ENCODE measurements at regions of chr19 and their contacts with region 1.

Region 1: DNA sequence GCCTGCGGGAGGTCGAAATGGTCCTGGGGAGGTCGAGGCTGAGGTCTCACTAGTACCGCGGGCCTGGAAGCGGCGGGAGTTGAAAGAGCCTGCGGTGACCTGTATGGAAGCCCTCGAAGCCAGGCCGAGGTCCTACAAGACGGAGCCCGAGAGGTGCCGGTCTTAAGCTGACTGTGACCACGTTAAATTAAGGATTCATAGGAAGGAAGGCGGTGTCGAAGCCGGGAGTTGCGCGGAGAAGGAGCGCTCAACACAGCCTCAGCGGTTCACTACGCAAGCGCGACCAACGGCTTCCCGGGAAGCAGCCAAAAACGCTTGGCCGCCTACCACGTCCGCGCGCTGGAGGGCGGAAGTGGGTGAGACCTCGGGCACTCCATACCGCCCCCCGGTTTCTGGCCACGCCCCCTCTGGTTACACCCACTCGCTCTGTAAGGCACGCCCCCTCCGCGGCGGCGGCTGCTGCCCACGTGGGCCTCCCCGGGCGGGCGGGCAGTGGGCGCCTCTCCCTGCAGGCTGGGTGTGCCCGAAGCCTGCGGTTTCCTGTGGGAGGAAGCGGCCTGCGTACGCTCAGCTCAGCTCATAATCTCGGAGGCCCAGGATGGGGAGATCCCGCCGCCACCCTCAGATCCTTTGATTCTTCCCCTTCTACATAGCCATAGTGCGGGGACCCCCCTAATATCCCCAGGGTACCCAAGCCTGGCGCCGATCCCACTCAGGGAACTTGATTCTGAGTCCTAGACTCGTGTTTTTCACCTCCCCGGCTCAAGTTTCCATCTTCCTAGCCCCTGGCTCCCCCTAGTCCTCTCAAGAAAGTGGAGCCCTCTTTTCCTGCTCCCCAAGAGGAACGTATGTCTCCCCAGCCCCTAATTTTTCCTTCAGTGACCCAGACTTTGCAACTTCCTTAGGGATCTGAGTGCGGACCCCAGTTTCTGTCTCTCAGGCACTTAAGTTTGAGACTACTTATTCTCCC is 3.4 kb upstream of the EMP3 start:
- DNase-seq: peak; percentile 99 to 100 (median 100)
- ATAC-seq: peak; percentile 87
- H3K4me3 ChIP-seq: peak overlapping the region; percentile 79
- H3K4me3 Mint-ChIP-seq: peak overlapping the region; percentile 90 to 99 (median 96)
- H3K27ac ChIP-seq: peak overlapping the region; percentile 100
- H3K27ac Mint-ChIP-seq: peak overlapping the region; percentile 96 to 100 (median 99)
- H3K4me1 ChIP-seq: peaks cover 45 to 47% of the 10 kb centered on the region in 2 donors
- H3K4me1 Mint-ChIP-seq: peaks cover 36 to 63% (median 51%) of the 10 kb centered on the region in 7 donors
- H3K27me3 ChIP-seq: no peaks in the 10 kb centered on the region
- H3K27me3 Mint-ChIP-seq: peaks cover 0 to 2% (median 0%) of the 10 kb centered on the region in 5 donors

Region 2: DNA sequence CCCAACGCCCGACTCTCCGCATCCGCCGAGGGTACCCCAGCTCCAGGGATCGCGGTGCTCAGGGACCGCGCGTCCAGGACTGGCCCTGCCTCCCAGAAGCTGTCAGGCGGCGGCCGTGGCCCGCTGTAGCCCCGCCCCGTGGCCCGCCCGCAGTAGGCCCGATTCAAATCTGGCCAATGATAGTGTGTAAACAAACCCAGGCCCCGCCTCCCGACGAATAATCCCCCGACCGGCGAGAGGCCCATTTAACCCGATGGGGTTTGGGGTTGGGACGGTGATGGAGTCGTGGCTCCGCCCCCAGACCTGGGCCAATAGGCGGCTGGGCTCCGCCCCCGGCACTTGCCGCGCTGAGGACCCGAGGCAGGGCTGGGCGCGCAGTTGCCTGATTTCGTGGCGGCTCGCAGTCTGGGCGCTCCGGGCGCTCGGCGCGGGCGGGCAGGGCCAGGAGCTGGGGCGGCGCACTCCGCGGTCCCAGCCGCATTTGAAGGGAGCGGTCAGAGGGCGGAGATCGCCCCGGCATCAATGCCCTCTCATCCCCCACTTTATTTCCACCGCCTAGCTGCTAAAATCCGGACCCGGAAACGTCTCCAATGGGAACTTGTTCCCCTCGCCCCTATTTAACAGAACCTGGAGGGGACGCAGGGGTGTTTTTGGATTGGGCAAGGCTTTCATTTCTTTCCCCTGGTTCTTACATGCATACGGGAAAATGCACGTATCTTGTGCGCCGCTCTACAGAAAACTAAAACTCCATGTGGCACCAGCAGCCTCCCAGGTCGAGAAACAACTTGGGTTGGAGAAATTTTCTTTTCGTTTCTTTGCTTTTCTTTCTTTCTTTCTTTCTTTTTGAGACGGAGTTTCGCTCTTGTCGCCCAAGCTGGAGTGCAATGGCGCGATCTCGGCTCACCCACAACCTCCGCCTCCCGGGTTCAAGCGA is 721.4 kb before region 1 on chr19:
- CTCF ChIA-PET with region 1: no interaction called
- POLR2A ChIA-PET with region 1: no interaction called
- intact Hi-C with region 1: loop called in 1 of 2 experiments (anchors 10 kb)
- DNase-seq: peak; percentile 86 to 99 (median 97)
- ATAC-seq: peak; percentile 98
- H3K4me3 ChIP-seq: peak overlapping the region; percentile 93
- H3K4me3 Mint-ChIP-seq: peak overlapping the region; percentile 79 to 91 (median 84)
- H3K27ac ChIP-seq: peak overlapping the region; percentile 81
- H3K27ac Mint-ChIP-seq: peak overlapping the region; percentile 75 to 94 (median 90)
- H3K4me1 ChIP-seq: peaks cover 0 to 7% of the 10 kb centered on the region in 2 donors
- H3K4me1 Mint-ChIP-seq: peaks cover 6 to 43% (median 21%) of the 10 kb centered on the region in 7 donors
- H3K27me3 ChIP-seq: no peaks in the 10 kb centered on the region
- H3K27me3 Mint-ChIP-seq: peaks cover 0 to 2% (median 0%) of the 10 kb centered on the region in 5 donors

Region 3: GRCh38 chr19:48271531-48272151 is 50.3 kb before region 1 on chr19:
- CTCF ChIA-PET with region 1: interaction called, 5 read pairs
- POLR2A ChIA-PET with region 1: no interaction called
- intact Hi-C with region 1: loop called in 1 of 2 experiments (anchors 1 kb)
- DNase-seq: peak in 4 of 9 donors; percentile 5 to 32 (median 9)
- ATAC-seq: peak; percentile 40
- H3K4me3 ChIP-seq: peak overlapping the region; percentile 55
- H3K4me3 Mint-ChIP-seq: peak overlapping the region; percentile 76 to 95 (median 88)
- H3K27ac ChIP-seq: no peak overlapping the region
- H3K27ac Mint-ChIP-seq: peak overlapping the region in 1 of 9 donors; percentile 33
- H3K4me1 ChIP-seq: peaks cover 0 to 5% of the 10 kb centered on the region in 2 donors
- H3K4me1 Mint-ChIP-seq: peaks cover 13 to 30% (median 20%) of the 10 kb centered on the region in 7 donors
- H3K27me3 ChIP-seq: no peaks in the 10 kb centered on the region
- H3K27me3 Mint-ChIP-seq: peaks cover 0 to 23% (median 11%) of the 10 kb centered on the region in 5 donors

Region 4: GRCh38 chr19:48302600-48302959 is 19.3 kb before region 1 on chr19:
- CTCF ChIA-PET with region 1: no interaction called
- POLR2A ChIA-PET with region 1: no interaction called
- intact Hi-C with region 1: no loop called
- DNase-seq: no peak
- ATAC-seq: no peak
- H3K4me3 ChIP-seq: no peak overlapping the region
- H3K4me3 Mint-ChIP-seq: no peak overlapping the region
- H3K27ac ChIP-seq: no peak overlapping the region
- H3K27ac Mint-ChIP-seq: no peak overlapping the region
- H3K4me1 ChIP-seq: no peaks in the 10 kb centered on the region
- H3K4me1 Mint-ChIP-seq: no peaks in the 10 kb centered on the region
- H3K27me3 ChIP-seq: no peaks in the 10 kb centered on the region
- H3K27me3 Mint-ChIP-seq: no peaks in the 10 kb centered on the region

Region 5: GRCh38 chr19:48398375-48399235 is 76.7 kb after region 1 on chr19:
- CTCF ChIA-PET with region 1: no interaction called
- POLR2A ChIA-PET with region 1: interaction called, 5 read pairs
- intact Hi-C with region 1: loop called in 1 of 2 experiments (anchors 2 kb)
- DNase-seq: peak; percentile 77 to 88 (median 86)
- ATAC-seq: peak; percentile 90
- H3K4me3 ChIP-seq: peak overlapping the region; percentile 63
- H3K4me3 Mint-ChIP-seq: peak overlapping the region; percentile 54 to 96 (median 79)
- H3K27ac ChIP-seq: peak overlapping the region; percentile 59
- H3K27ac Mint-ChIP-seq: peak overlapping the region; percentile 22 to 97 (median 85)
- H3K4me1 ChIP-seq: peaks cover 17 to 29% of the 10 kb centered on the region in 2 donors
- H3K4me1 Mint-ChIP-seq: peaks cover 18 to 51% (median 41%) of the 10 kb centered on the region in 7 donors
- H3K27me3 ChIP-seq: peaks cover 9 to 21% of the 10 kb centered on the region in 2 donors
- H3K27me3 Mint-ChIP-seq: peaks cover 15 to 43% (median 31%) of the 10 kb centered on the region in 5 donors

Region 6: DNA sequence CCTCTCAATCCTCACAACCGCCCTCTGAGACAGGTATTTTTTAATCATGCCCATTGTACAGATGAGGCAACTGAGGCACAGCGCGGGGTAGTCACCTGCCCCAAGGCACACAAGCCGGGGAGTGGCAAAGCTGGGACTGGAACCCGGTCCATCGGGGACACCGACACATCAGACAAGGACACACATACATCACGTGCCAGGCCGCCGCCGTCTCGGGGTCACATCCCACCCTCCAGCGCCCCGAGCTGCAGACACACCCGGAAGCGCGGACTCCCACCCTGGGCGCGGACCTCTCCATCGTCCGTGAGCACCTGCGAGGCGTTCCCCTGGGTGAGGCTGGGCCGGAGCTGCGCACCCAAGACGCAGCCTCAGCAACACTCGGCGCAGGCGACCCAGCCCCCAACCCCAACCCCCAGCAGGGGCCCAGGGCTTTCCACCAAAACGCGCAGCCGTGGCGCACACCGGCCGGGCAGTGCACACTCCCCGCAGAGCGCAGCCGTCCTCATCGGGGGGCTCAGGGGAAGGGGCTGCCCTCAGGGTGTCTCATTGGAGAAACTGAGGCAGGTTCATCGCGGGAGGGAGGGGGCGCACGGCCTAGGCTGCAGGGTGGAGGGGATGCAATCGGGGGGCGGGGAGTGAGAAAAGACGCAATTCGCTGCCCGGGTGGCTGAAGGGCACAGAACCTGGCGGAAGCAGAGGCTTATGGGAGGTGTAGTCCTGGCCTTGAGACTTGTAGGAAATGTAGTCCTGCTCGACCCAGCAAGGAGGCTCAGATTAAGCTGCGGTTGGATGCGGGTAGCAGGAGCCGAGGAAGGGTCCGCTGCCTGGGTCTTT is 191.6 kb after region 1 on chr19:
- CTCF ChIA-PET with region 1: no interaction called
- POLR2A ChIA-PET with region 1: no interaction called
- intact Hi-C with region 1: loop called in 1 of 2 experiments (anchors 2 kb)
- DNase-seq: peak in 8 of 9 donors; percentile 69 to 84 (median 78)
- ATAC-seq: peak; percentile 77
- H3K4me3 ChIP-seq: peak overlapping the region; percentile 72
- H3K4me3 Mint-ChIP-seq: no peak overlapping the region
- H3K27ac ChIP-seq: peak overlapping the region; percentile 82
- H3K27ac Mint-ChIP-seq: peak overlapping the region in 3 of 9 donors; percentile 68 to 91 (median 90)
- H3K4me1 ChIP-seq: peaks cover 21 to 22% of the 10 kb centered on the region in 2 donors
- H3K4me1 Mint-ChIP-seq: peaks cover 11 to 18% (median 13%) of the 10 kb centered on the region in 7 donors
- H3K27me3 ChIP-seq: no peaks in the 10 kb centered on the region
- H3K27me3 Mint-ChIP-seq: no peaks in the 10 kb centered on the region

Region 7: GRCh38 chr19:49451430-49452181 is 1129.7 kb after region 1 on chr19 and contains the start of gene PIH1D1:
- CTCF ChIA-PET with region 1: no interaction called
- POLR2A ChIA-PET with region 1: no interaction called
- intact Hi-C with region 1: loop called in 1 of 2 experiments (anchors 5 kb)
- DNase-seq: peak; percentile 69 to 97 (median 94)
- ATAC-seq: peak; percentile 71
- H3K4me3 ChIP-seq: peak within 1 kb of the TSS; percentile 85
- H3K4me3 Mint-ChIP-seq: peak within 1 kb of the TSS; percentile 95 to 100 (median 99)
- H3K27ac ChIP-seq: peak within 1 kb of the TSS; percentile 95
- H3K27ac Mint-ChIP-seq: peak within 1 kb of the TSS; percentile 92 to 100 (median 99)
- H3K4me1 ChIP-seq: peaks cover 15 to 26% of the 10 kb centered on the region in 2 donors
- H3K4me1 Mint-ChIP-seq: peaks cover 31 to 68% (median 55%) of the 10 kb centered on the region in 7 donors
- H3K27me3 ChIP-seq: no peaks in the 10 kb centered on the region
- H3K27me3 Mint-ChIP-seq: no peaks in the 10 kb centered on the region
- total RNA-seq, gene PIH1D1: 136 to 183 (median 159) TPM

Measured in naive thymus-derived CD4-positive, alpha-beta T cell (primary cell).